ENCODE measurements at regions of chr1 and their contacts with region 1.

Region 1: DNA sequence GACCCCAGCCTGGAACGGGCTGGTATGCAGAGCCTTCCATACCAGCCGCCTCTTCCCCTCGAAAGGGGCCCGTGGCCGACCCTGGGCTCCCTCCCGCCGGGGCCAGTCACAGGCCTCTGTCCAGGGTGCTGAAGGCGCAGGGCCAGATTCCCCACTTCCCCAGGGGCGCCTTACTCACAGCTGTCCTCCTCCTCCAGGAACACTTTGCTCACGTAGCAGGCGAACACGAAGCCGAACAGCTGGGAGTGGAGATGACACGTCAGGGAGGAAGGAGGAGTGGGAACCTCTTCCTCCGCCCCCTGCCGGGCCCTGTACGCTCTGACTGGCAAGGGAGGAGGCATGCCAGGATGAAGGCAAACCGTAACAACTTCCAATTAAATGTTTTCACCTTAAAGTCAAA is 57.3 kb downstream of the NKAIN1 start:
- DNase-seq: peak; percentile 91 to 97 (median 94)
- H3K4me3 ChIP-seq: no peak overlapping the region
- H3K27ac ChIP-seq: no peak overlapping the region
- H3K4me1 ChIP-seq: peaks cover 0 to 6% (median 0%) of the 10 kb centered on the region in 3 donors
- H3K27me3 ChIP-seq: no peaks in the 10 kb centered on the region
- CTCF ChIP-seq: peak; percentile 5

Region 2: DNA sequence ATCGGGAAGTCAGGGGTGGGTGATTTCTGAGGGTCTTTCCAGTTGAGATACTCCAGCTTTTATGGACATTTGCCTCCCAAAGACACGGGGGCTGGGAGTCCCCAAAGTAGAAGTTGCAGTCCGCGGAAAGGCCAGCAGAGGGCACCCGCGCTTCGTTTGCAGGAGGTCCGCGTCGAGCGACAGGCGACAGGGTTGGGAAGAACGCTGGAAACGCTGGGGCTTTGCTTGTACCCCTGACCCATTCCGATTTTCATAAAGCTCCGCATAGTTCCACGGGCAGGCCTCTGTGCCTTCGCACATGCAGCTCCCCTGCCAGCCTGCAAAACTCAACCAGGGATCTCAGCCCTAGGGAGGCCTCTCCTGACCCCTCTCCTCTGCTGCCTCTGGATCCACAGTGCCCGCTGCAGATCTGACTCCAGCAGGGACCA is 380.6 kb before region 1 on chr1:
- intact Hi-C with region 1: no loop called
- DNase-seq: peak; percentile 90 to 92 (median 91)
- H3K4me3 ChIP-seq: no peak overlapping the region
- H3K27ac ChIP-seq: no peak overlapping the region
- H3K4me1 ChIP-seq: peaks cover 0 to 10% (median 0%) of the 10 kb centered on the region in 3 donors
- H3K27me3 ChIP-seq: no peaks in the 10 kb centered on the region
- CTCF ChIP-seq: peak; percentile 98

Region 3: GRCh38 chr1:30911046-30911954 is 271.1 kb before region 1 on chr1:
- intact Hi-C with region 1: no loop called
- DNase-seq: peak; percentile 90 to 95 (median 92)
- H3K4me3 ChIP-seq: no peak overlapping the region
- H3K27ac ChIP-seq: no peak overlapping the region
- H3K4me1 ChIP-seq: peaks cover 0 to 12% (median 0%) of the 10 kb centered on the region in 3 donors
- H3K27me3 ChIP-seq: no peaks in the 10 kb centered on the region
- CTCF ChIP-seq: peak; percentile 94

Region 4: DNA sequence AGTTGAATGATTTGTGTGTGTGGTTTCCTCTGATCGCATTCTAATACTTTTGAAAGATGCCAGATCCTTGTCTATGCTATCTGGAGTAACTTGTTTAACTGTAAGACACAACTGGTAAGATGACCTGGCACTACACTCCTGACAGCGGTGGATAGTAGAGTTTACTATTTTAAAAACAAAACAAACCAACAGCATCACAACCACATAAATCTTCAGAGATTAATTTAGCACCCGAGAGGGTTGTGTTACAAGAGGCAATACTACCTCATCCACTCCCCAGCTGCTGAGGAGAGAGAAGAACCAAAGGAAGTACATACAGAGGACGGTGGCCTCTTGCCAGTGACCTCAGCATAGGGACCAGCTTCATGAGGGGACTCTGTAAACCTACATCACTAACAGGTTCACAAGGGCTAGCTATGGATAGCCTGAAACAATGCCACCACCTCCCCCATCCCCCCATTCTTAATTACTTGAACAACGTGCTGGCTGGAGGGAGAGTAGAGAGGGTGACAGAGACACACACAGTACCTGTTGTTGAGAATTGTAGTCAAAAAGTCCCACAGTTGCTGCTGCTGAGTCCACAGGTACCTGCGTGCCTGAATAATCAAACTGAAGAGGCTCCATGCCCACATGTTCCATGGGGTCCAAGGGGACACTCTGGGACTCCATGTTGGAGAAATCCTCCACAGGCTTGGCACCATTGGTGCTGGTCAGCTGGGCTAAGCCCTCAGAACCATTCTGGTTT is 190.3 kb before region 1 on chr1:
- intact Hi-C with region 1: no loop called
- DNase-seq: peak in 3 of 5 donors; percentile 50 to 89 (median 68)
- H3K4me3 ChIP-seq: no peak overlapping the region
- H3K27ac ChIP-seq: no peak overlapping the region
- H3K4me1 ChIP-seq: peaks cover 0 to 11% (median 7%) of the 10 kb centered on the region in 3 donors
- H3K27me3 ChIP-seq: no peaks in the 10 kb centered on the region
- CTCF ChIP-seq: no peak

Region 5: GRCh38 chr1:31372961-31373896 is 190.9 kb after region 1 on chr1 and contains the start of gene FABP3:
- intact Hi-C with region 1: no loop called
- DNase-seq: peak; percentile 91 to 95 (median 94)
- H3K4me3 ChIP-seq: peak within 1 kb of the TSS; percentile 42 to 58 (median 49)
- H3K27ac ChIP-seq: peak within 1 kb of the TSS; percentile 89 to 98
- H3K4me1 ChIP-seq: peaks cover 2 to 52% (median 41%) of the 10 kb centered on the region in 3 donors
- H3K27me3 ChIP-seq: no peaks in the 10 kb centered on the region
- CTCF ChIP-seq: no peak
- total RNA-seq, gene FABP3: 25.0 TPM

Region 6: GRCh38 chr1:31422505-31423319 is 240.4 kb after region 1 on chr1:
- intact Hi-C with region 1: loop called (anchors 10 kb)
- DNase-seq: peak; percentile 73 to 87 (median 78)
- H3K4me3 ChIP-seq: no peak overlapping the region
- H3K27ac ChIP-seq: peak overlapping the region in 1 of 2 donors; percentile 32
- H3K4me1 ChIP-seq: peaks cover 0 to 10% (median 6%) of the 10 kb centered on the region in 3 donors
- H3K27me3 ChIP-seq: no peaks in the 10 kb centered on the region
- CTCF ChIP-seq: peak; percentile 98

Measured in kidney (tissue), 22 donors.